ENCODE measurements at regions of chr17 and their contacts with region 1.

Region 1: DNA sequence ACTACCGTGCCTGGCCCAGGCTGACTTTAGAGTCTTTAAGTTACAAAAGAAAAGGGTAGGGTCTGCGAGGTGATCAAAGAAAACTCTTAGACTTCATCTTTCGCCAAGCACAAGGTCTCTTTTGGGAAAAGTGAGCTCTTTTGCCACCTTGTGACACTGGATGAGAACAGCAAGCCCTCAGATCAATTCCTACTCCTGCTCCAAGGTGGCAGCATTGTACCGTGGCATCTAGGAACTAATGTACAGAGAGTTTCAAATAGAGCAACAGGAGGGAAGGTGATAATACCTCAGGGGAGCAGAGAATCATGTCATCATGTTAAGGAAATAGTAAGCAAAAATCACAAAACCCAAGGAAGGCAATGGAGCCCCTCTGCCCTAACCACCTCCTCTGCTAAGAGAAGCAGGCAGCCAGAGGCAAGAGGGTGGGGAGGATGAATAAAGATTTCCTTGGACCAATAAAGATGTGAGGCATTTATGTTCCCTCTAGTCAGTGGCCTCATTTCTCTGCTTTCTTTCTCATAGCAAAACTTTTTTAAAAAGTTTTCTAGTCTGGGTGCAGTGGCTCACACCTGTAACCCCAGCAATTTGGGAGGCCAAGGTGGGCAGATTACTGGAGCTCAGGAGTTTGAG is 2.1 kb upstream of the C17orf78 start:
- DNase-seq: peak; percentile 68
- H3K4me3 ChIP-seq: no peak overlapping the region
- H3K27ac ChIP-seq: no peak overlapping the region
- H3K27me3 ChIP-seq: no peaks in the 10 kb centered on the region
- CTCF ChIP-seq: peak; percentile 100

Region 2: GRCh38 chr17:36592716-36593321 is 780.8 kb before region 1 on chr17:
- CTCF ChIA-PET with region 1: no interaction called
- POLR2A ChIA-PET with region 1: no interaction called
- DNase-seq: no peak
- H3K4me3 ChIP-seq: peak overlapping the region; percentile 68
- H3K27ac ChIP-seq: no peak overlapping the region
- H3K27me3 ChIP-seq: no peaks in the 10 kb centered on the region
- CTCF ChIP-seq: no peak

Region 3: DNA sequence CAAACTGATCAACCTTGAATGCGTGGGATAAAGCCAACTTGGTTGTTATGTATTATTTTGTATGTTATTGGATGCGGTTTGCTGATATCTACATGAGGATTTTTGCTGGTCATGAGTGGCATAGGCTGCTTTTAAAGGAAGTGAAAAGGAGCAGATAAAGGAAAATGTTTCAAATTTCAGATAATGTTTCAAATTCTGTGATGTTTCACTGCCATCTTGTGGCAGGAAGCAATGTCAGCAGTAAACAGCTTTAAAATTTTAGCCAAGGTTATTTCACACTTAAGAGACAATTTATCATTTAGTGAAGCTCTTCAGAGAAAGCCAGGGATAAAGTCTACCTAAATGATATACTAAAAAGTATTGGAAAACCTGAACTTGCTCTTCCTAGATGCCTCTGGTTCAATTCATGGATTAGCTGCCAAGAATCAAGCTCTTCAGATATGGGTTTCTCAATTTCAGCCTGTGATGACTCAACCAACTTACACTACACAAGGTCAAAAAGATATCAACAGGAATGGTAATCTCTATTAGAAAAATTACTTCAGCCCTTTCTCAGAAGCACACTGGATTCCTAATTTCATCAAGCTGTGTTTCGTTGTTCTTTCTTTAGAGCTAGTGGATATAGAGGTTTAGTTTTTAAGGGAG is 133.8 kb before region 1 on chr17:
- CTCF ChIA-PET with region 1: interaction called, 37 read pairs
- POLR2A ChIA-PET with region 1: no interaction called
- DNase-seq: no peak
- H3K4me3 ChIP-seq: no peak overlapping the region
- H3K27ac ChIP-seq: no peak overlapping the region
- H3K27me3 ChIP-seq: no peaks in the 10 kb centered on the region
- CTCF ChIP-seq: peak; percentile 80

Region 4: DNA sequence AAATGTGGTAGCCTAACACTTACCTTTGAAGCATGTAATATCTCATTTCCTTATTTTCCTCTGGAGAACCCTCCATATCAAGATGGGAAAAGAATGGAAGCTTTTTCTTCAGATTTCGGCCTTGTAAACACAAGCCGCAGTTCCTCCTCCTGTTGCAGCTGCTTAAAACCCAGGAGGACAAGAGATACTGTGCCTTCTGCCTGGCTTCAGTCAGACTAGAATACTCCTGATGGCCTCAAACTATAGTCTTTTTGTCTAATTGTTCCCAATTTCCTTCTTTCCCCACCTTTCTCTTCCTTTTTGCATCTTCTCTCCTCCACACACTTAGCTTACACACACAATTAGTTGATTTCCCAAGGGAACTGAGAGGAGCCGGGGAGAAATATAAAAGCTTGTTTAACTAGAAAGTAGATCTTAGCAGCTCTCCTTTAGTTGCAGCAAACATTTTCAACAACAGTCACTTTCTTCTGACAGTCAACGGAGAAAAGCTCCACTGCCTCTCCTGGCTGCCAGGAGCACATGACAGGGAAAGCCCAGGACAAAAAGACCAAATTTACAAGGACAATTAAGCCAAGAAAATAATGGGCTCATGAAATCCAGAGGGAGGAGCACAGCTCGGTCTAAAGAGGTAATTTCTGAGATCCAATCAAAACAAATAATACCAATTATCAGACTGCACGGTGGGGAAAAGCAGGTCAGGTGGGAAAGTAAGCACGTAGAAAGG is 74.2 kb before region 1 on chr17:
- CTCF ChIA-PET with region 1: interaction called, 14 read pairs
- POLR2A ChIA-PET with region 1: no interaction called
- DNase-seq: no peak
- H3K4me3 ChIP-seq: no peak overlapping the region
- H3K27ac ChIP-seq: no peak overlapping the region
- H3K27me3 ChIP-seq: no peaks in the 10 kb centered on the region
- CTCF ChIP-seq: no peak

Region 5: DNA sequence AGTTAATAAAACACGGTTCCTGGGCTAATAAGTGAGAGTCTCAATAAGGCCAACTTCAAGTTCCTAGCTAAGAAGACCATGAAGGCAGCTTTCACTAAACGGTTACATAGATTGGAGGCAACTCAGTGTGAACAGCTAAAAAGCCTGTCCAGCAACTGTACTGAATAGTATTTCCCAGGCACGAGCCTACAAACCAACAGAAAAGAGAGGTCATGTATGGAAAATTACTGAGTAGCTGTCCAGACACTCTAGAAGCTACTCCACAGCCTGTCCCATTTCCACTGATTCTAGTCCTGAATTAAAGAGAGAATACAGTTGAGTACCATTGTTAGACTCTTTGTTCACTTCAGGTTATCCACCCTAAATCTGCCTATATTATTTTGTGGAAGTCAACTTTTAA is 34.3 kb before region 1 on chr17:
- CTCF ChIA-PET with region 1: interaction called, 10 read pairs
- POLR2A ChIA-PET with region 1: no interaction called
- DNase-seq: no peak
- H3K4me3 ChIP-seq: no peak overlapping the region
- H3K27ac ChIP-seq: no peak overlapping the region
- H3K27me3 ChIP-seq: no peaks in the 10 kb centered on the region
- CTCF ChIP-seq: no peak

Region 6: DNA sequence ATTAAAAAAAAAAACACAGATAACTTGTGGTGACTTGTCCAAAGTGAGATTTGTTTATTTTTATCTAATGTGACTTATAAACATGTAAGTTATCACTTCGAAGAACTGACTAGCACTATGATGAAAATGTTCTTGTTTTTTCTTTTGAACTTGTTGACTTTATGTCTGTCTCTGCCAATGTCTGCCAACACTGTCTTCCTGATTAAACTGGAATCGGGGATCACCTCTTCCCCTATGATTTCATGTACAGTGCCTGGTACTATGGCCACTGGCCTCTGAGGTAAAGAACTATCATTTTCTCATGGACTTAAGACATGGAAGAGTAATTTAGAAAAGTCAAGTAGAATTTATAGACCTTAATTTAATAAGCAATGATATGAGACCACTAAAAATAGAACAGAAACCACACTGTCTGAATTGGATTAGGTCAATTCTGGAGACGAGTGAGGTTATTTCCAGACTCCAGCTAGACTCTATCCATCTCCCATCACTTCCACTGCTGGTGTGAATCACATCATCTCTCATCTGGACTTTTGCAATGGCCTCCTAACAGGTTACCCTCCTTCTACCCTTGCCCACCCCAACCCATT is 11.0 kb after region 1 on chr17:
- CTCF ChIA-PET with region 1: interaction called, 26 read pairs
- POLR2A ChIA-PET with region 1: interaction called, 3 read pairs
- DNase-seq: no peak
- H3K4me3 ChIP-seq: no peak overlapping the region
- H3K27ac ChIP-seq: no peak overlapping the region
- H3K27me3 ChIP-seq: no peaks in the 10 kb centered on the region
- CTCF ChIP-seq: no peak

Region 7: DNA sequence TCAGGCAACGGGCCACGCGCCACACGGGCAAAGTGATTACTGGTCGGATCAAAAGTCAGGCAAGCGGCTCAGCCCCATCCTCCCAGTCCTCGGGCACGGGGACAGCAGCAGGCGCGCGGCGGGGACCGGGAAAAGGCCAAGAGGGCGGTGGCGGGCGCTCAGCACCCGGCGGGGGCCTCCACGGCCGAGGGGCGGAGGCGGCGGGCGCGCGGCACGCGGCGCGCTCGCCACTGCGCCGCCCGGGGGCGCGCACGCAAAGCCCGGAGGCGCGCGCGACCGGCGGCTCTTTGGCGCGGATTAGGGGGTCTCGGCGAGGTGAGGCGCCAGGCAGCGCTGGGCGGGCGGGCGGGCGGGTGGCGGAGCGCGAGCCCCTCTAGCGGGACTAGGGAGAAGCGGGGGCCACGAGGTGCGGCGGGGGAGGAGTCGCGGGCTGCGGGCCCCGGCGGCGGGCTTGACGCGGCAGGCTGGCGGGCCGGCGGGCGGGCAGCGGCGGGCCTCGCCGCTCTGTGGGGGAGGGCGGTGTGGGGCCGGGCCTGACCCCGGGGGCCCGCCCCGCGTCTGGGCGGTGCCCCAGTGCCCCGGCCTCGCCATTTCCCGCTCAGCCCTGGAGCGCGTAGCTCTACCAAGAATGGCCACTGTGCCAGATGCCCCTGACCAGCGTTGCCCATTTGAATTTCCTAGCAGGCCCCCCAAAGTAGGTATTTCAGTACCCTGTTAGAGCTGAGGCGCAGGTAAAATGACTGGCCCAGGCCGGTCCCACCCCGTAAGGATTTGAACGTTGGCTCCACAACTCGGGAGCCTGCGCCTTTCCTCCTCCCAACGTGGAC is 33.2 kb after region 1 on chr17 and contains the starts of genes ACACA and TADA2A:
- CTCF ChIA-PET with region 1: interaction called, 12 read pairs
- POLR2A ChIA-PET with region 1: no interaction called
- DNase-seq: no peak
- H3K4me3 ChIP-seq: peak within 1 kb of the TSS; percentile 87
- H3K27ac ChIP-seq: peak within 1 kb of the TSS; percentile 59
- H3K27me3 ChIP-seq: no peaks in the 10 kb centered on the region
- CTCF ChIP-seq: no peak
- polyA plus RNA-seq, gene ACACA: 53.6 and 57.9 TPM in 2 replicates
- polyA plus RNA-seq, gene TADA2A: 18.1 and 21.4 TPM in 2 replicates

Measured in AG04450 (cell line).